ENCODE measurements at regions of chr17 and their contacts with region 1.

Region 1: GRCh38 chr17:15999439-16000350 is at the starts of genes TTC19 and ZSWIM7:
- DNase-seq: peak; percentile 99
- ATAC-seq: peak; percentile 93
- H3K4me3 ChIP-seq: peak within 1 kb of the TSS; percentile 94
- H3K27ac ChIP-seq: peak within 1 kb of the TSS; percentile 88
- H3K4me1 ChIP-seq: peaks cover 38% of the 10 kb centered on the region
- H3K27me3 ChIP-seq: no peaks in the 10 kb centered on the region
- CTCF ChIP-seq: no peak
- total RNA-seq, gene TTC19: 187 and 436 TPM in 2 replicates
- total RNA-seq, gene ZSWIM7: 96.1 and 97.6 TPM in 2 replicates

Region 2: GRCh38 chr17:15414532-15415306 is 585.0 kb before region 1 on chr17:
- CTCF ChIA-PET with region 1: no interaction called
- POLR2A ChIA-PET with region 1: no interaction called
- intact Hi-C with region 1: no loop called
- DNase-seq: no peak
- ATAC-seq: no peak
- H3K4me3 ChIP-seq: no peak overlapping the region
- H3K27ac ChIP-seq: no peak overlapping the region
- H3K4me1 ChIP-seq: peaks cover 7% of the 10 kb centered on the region
- H3K27me3 ChIP-seq: no peaks in the 10 kb centered on the region
- CTCF ChIP-seq: no peak

Region 3: GRCh38 chr17:15651583-15652110 is 348.0 kb before region 1 on chr17:
- CTCF ChIA-PET with region 1: no interaction called
- POLR2A ChIA-PET with region 1: interaction called, 10 read pairs
- intact Hi-C with region 1: no loop called
- DNase-seq: peak; percentile 100
- ATAC-seq: peak; percentile 91
- H3K4me3 ChIP-seq: peak overlapping the region; percentile 79
- H3K27ac ChIP-seq: peak overlapping the region; percentile 85
- H3K4me1 ChIP-seq: peaks cover 35% of the 10 kb centered on the region
- H3K27me3 ChIP-seq: no peaks in the 10 kb centered on the region
- CTCF ChIP-seq: no peak

Region 4: DNA sequence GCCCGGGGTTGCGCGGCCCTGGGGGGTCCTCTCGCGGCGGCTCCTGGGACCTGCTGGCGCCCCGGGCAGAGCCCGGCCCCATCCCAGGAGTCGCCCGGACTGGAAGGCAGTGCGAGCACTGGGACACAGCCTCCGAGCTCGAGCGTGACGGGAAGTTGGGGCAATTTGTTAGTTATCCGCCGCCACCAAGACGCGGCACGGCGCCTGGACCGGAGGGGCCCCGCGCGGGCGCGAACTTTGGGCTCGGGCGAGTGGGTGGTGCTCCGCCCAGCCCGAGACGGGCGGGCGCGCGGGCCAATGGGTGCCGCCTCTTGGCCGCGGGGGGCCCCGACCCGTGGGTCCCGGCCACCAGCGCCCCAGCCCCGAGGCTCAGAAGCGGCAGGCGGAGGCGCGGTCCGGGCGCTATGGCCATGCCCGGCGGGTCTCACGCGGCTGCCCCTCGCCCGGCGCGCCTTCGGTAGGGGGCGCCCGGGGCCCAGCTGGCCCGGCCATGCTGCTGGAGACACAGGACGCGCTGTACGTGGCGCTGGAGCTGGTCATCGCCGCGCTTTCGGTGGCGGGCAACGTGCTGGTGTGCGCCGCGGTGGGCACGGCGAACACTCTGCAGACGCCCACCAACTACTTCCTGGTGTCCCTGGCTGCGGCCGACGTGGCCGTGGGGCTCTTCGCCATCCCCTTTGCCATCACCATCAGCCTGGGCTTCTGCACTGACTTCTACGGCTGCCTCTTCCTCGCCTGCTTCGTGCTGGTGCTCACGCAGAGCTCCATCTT is 54.8 kb before region 1 on chr17 and contains the start of gene ADORA2B:
- CTCF ChIA-PET with region 1: interaction called, 3 read pairs
- POLR2A ChIA-PET with region 1: interaction called, 6 read pairs
- intact Hi-C with region 1: loop called (anchors 1 kb)
- DNase-seq: peak; percentile 86
- ATAC-seq: peak; percentile 62
- H3K4me3 ChIP-seq: peak within 1 kb of the TSS; percentile 81
- H3K27ac ChIP-seq: peak within 1 kb of the TSS; percentile 83
- H3K4me1 ChIP-seq: peaks cover 57% of the 10 kb centered on the region
- H3K27me3 ChIP-seq: no peaks in the 10 kb centered on the region
- CTCF ChIP-seq: peak; percentile 61
- total RNA-seq, gene ADORA2B: 118 and 130 TPM in 2 replicates

Region 5: GRCh38 chr17:15957608-15958307 is 41.9 kb before region 1 on chr17:
- CTCF ChIA-PET with region 1: interaction called, 3 read pairs
- POLR2A ChIA-PET with region 1: no interaction called
- intact Hi-C with region 1: loop called (anchors 2 kb)
- DNase-seq: peak; percentile 35
- ATAC-seq: no peak
- H3K4me3 ChIP-seq: no peak overlapping the region
- H3K27ac ChIP-seq: peak overlapping the region; percentile 94
- H3K4me1 ChIP-seq: peaks cover 74% of the 10 kb centered on the region
- H3K27me3 ChIP-seq: no peaks in the 10 kb centered on the region
- CTCF ChIP-seq: no peak

Measured in PC-3 (cell line).